Endothelial cell of umbilical vein (primary cell): ENCODE measurements at regions of chr17 and their contacts with region 1.

Region 1: GRCh38 chr17:21511363-21512198 is 135.4 kb downstream of the KCNJ12 start:
- DNase-seq: peak; percentile 87
- H3K4me3 ChIP-seq: peak overlapping the region; percentile 40 to 78 (median 71)
- H3K27ac ChIP-seq: peak overlapping the region; percentile 7
- H3K4me1 ChIP-seq: peaks cover 9% of the 10 kb centered on the region
- H3K27me3 ChIP-seq: peaks cover 1 to 3% of the 10 kb centered on the region in 2 experiments
- CTCF ChIP-seq: peak; percentile 79 to 85
- POLR2A ChIP-seq: no peak

Region 2: GRCh38 chr17:21119247-21119918 is 392.2 kb before region 1 on chr17:
- CTCF ChIA-PET with region 1: interaction called, 58 read pairs
- POLR2A ChIA-PET with region 1: no interaction called
- dilution Hi-C with region 1: no loop called
- intact Hi-C with region 1: loop called (anchors 1 kb)
- DNase-seq: peak; percentile 61
- H3K4me3 ChIP-seq: peak overlapping the region in 1 of 3 experiments; percentile 9
- H3K27ac ChIP-seq: no peak overlapping the region
- H3K4me1 ChIP-seq: peaks cover 4% of the 10 kb centered on the region
- H3K27me3 ChIP-seq: peaks cover 0 to 2% of the 10 kb centered on the region in 2 experiments
- CTCF ChIP-seq: peak; percentile 81 to 86
- POLR2A ChIP-seq: no peak

Region 3: DNA sequence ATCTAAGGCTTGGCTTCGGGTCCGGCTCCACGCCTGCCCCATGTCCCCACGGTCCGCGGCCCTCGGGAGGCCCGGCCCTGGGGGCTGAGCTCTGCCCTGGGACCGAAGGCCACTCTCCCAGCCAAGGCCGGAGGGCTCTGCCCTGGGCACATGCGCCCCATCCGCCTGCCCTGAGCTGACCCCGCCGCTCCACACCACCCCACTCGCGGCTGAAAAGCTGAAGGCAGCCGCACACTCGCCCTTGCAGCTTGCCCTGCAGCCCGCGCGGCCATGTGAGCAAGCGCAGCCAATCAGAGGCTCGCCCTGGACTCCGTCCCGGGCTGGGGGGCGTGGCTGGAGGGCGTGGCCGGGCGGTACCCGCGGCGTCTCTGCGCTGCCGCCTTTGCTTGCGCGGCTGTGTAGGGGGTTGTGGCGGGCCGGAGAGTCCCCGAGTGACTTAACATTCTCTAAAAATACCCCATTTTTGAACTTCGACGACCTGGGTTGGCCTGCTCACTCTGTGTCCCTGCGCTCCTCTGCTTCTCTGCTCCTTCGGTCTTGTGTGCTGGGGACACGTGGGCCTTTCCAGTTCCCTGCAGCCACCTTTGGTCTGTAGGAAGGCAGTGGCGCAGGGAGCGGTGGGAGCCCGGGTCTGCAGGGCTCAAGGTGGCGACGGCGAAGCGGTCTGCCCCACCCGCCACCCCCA is 235.9 kb before region 1 on chr17:
- CTCF ChIA-PET with region 1: interaction called, 68 read pairs
- POLR2A ChIA-PET with region 1: no interaction called
- dilution Hi-C with region 1: no loop called
- intact Hi-C with region 1: loop called (anchors 1 kb)
- DNase-seq: peak; percentile 81
- H3K4me3 ChIP-seq: peak overlapping the region; percentile 5 to 56 (median 39)
- H3K27ac ChIP-seq: no peak overlapping the region
- H3K4me1 ChIP-seq: peaks cover 11% of the 10 kb centered on the region
- H3K27me3 ChIP-seq: no peaks in the 10 kb centered on the region
- CTCF ChIP-seq: no peak
- POLR2A ChIP-seq: peak; percentile 76

Region 4: DNA sequence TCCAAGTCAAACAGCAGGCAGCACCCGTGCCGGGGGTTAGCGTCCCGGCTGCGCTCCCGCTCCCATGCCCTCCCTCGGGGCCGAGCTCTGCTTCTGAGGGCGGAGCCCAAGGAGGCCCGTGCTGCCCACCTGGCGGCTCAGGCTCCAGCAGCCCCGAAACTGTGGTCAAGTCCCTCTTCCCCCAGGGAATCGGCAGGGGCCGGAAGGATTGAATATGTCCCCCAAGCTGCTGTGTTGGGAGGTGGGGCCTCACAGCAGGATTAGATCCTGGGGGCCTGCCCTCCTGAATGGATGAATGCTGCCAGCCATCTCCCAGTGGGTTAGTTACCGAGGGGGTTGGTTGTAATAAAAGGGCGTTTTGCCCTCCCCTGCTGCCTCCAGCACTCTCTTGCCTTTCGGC is 193.1 kb before region 1 on chr17:
- CTCF ChIA-PET with region 1: interaction called, 4 read pairs
- POLR2A ChIA-PET with region 1: no interaction called
- dilution Hi-C with region 1: no loop called
- intact Hi-C with region 1: loop called (anchors 1 kb)
- DNase-seq: no peak
- H3K4me3 ChIP-seq: no peak overlapping the region
- H3K27ac ChIP-seq: no peak overlapping the region
- H3K4me1 ChIP-seq: no peaks in the 10 kb centered on the region
- H3K27me3 ChIP-seq: peaks cover 0 to under 1% of the 10 kb centered on the region in 2 experiments
- CTCF ChIP-seq: no peak
- POLR2A ChIP-seq: no peak

Region 5: DNA sequence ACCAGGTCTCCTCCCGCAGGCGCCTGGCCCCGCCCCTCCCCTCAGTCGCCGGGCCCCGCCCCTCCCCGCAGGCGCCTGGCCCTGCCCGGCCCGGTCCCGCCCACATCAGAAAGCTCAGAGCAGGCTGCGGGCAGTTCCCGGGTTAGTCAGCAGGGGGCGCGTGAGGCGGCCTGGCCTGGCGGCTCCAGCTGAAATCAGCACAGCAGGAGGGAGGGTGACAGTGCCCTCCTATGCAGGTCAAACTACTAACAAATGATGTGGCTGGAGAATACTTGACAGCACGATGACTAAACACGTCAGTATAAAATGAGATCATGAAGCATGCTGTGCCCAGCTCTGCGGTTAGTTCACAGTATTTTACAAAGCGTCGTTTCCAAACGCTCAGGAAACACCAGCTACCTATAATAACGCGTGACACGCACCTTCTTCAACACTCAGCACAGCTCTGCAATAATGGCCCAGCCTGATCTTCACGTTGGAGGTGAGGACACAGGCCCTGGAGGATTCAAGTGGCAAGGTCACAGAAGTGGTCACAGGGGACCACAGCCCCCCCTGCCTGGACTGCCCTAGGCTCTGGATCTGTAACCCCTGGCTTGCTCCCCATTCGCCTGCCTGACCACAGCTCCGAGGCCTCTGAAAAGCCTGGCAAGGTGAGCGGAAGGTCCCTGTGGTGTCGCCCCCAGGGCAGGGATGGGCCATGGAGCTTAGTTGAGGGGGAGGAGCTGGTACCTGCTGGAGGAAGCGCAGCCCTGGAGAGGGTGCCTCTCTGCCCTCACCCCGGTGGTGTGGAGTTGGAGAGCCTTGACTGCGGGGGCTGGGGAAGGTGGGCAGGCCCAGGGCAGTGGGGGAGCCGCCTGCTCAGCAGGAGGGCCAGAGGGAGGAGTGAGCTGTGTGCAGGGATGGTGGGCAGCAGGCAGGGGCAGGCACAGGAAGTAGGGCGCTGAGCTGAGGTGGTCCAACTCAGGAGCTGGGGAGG is 54.2 kb before region 1 on chr17:
- CTCF ChIA-PET with region 1: interaction called, 316 read pairs
- POLR2A ChIA-PET with region 1: no interaction called
- dilution Hi-C with region 1: no loop called
- intact Hi-C with region 1: loop called (anchors 1 kb)
- DNase-seq: peak; percentile 86
- H3K4me3 ChIP-seq: no peak overlapping the region
- H3K27ac ChIP-seq: no peak overlapping the region
- H3K4me1 ChIP-seq: peaks cover 4% of the 10 kb centered on the region
- H3K27me3 ChIP-seq: no peaks in the 10 kb centered on the region
- CTCF ChIP-seq: peak; percentile 73 to 93
- POLR2A ChIP-seq: no peak

Region 6: GRCh38 chr17:21524211-21524591 is 12.6 kb after region 1 on chr17:
- CTCF ChIA-PET with region 1: interaction called, 27 read pairs
- POLR2A ChIA-PET with region 1: no interaction called
- dilution Hi-C with region 1: no loop called
- intact Hi-C with region 1: no loop called
- DNase-seq: no peak
- H3K4me3 ChIP-seq: no peak overlapping the region
- H3K27ac ChIP-seq: no peak overlapping the region
- H3K4me1 ChIP-seq: no peaks in the 10 kb centered on the region
- H3K27me3 ChIP-seq: no peaks in the 10 kb centered on the region
- CTCF ChIP-seq: no peak
- POLR2A ChIP-seq: no peak

Region 7: GRCh38 chr17:21592774-21593173 is 81.2 kb after region 1 on chr17:
- CTCF ChIA-PET with region 1: no interaction called
- POLR2A ChIA-PET with region 1: no interaction called
- dilution Hi-C with region 1: no loop called
- intact Hi-C with region 1: no loop called
- DNase-seq: no peak
- H3K4me3 ChIP-seq: no peak overlapping the region
- H3K27ac ChIP-seq: no peak overlapping the region
- H3K4me1 ChIP-seq: no peaks in the 10 kb centered on the region
- H3K27me3 ChIP-seq: no peaks in the 10 kb centered on the region
- CTCF ChIP-seq: no peak
- POLR2A ChIP-seq: no peak